ENCODE measurements at regions of chr17 and their contacts with region 1.

Region 1: GRCh38 chr17:3575511-3575910 is 17.9 kb upstream of the TRPV3 start:
- DNase-seq: peak; percentile 95
- ATAC-seq: peak; percentile 89
- H3K4me3 ChIP-seq: no peak overlapping the region
- H3K27ac ChIP-seq: peak overlapping the region; percentile 100
- H3K4me1 ChIP-seq: peaks cover 24% of the 10 kb centered on the region
- H3K27me3 ChIP-seq: no peaks in the 10 kb centered on the region
- CTCF ChIP-seq: no peak

Region 2: DNA sequence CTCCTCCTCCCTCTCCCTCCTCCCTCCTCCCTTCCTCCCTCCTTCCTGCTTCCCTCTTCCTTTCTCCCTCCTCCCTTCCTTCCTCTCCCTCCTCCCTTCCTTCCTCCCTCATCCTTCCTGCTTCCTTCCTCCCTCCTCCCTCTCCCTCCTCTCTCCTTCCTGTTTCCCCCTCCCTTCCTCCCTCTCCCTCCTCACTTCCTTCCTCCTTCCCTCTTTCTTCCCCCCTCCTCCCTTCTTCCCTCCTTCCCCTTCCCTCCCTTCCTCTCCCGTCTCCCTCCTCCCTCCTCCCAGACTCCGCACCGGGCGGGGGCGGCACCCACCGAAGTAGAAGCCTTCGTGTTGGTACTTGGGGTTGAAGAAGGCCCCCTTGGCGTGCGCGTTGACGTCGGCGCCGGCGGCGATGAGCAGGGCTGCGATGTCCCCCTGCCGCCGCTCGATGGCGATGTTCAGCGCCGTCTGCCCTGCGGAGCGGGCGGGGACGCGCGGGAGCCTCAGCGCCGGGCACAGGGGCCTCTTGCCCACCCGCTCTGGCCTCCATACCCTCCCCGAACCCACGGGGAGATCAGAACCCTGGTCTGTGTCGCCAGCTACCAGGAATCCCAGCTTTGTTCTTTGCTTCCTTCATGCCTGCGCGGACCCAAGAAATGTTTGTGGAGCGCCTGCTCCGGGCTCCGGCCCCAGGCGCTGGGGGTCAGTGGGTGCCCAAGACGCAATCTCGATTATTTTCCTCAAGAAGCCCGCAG is 40.1 kb before region 1 on chr17:
- CTCF ChIA-PET with region 1: no interaction called
- POLR2A ChIA-PET with region 1: interaction called, 11 read pairs
- intact Hi-C with region 1: no loop called
- DNase-seq: peak; percentile 77
- ATAC-seq: peak; percentile 74
- H3K4me3 ChIP-seq: peak overlapping the region; percentile 61
- H3K27ac ChIP-seq: peak overlapping the region; percentile 67
- H3K4me1 ChIP-seq: peaks cover 3% of the 10 kb centered on the region; the same call in 1 of the 2 replicates
- H3K27me3 ChIP-seq: no peaks in the 10 kb centered on the region
- CTCF ChIP-seq: peak; percentile 74

Region 3: DNA sequence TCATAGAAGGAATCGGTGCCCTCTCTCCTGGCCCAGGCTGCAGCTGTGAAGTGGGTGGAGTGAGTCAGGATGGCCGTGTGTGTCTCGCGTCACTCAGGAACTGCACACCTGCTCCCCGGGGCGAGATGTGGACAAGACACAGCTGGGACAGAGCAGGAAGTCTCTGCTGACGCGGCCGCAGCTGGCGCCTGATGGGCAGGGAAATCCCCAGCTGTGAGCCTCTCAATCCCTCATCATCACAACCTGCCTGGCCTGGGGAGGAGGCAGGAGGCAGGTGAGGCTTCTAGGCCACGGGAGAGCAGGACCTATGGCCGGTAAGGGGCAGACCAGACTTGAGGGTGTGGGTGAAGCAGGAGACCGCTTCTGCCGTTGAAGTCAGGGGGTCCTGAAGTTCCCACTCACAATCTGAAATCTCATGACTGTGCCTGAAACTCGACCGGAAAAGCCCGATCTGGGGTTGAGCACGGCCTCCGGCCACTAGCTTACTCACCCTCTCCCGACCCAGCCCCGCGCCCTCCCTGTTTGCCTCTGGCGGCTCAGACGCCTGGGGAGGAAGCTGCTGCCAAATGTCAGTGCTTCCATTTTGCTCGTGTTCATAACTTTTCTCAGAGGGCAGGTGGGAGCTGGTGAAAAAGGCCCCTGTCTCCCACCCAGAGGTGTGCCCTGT is 16.8 kb before region 1 on chr17:
- CTCF ChIA-PET with region 1: no interaction called
- POLR2A ChIA-PET with region 1: interaction called, 5 read pairs
- intact Hi-C with region 1: loop called (anchors 2 kb)
- DNase-seq: peak; percentile 74
- ATAC-seq: peak; percentile 80
- H3K4me3 ChIP-seq: peak overlapping the region; percentile 35; the same call in 1 of the 2 replicates
- H3K27ac ChIP-seq: peak overlapping the region; percentile 99
- H3K4me1 ChIP-seq: peaks cover 33% of the 10 kb centered on the region
- H3K27me3 ChIP-seq: no peaks in the 10 kb centered on the region
- CTCF ChIP-seq: no peak

Region 4: DNA sequence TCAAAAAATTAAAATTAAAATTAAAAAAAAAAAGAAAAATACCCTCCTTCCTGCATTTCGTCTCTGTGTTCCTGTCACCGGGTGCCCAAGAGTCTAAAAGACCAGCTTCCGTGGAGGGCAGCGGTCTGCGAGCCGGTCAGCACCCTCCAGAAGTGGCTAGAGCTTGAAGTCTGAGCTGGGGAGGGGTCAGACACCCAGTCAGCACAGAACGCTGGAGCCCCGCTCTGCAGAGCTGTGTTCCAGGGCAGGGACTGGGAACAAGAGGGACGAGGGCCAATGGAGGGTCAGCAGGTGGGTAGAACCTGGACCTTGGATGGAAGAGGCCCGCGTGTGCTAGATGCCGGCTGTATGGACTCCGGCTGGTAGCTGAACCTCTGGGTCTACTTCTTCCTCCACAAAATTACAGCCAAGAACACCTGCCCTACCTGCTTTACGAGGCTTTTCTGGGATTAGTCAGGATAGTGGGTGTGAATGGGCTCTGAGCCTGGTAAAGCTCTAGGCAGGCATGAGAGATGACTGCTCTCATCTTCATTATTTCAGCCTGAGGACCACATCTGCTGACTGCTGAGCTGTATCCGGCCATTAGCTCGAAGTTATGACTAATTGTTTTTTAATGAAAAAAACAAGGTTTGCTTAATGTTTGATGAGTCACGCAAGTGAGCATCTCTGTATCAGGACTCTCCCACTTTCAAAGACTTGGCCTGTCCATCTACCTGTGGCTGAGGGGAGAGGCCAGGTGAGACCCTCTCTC is 27.8 kb after region 1 on chr17:
- CTCF ChIA-PET with region 1: no interaction called
- POLR2A ChIA-PET with region 1: no interaction called
- intact Hi-C with region 1: loop called (anchors 1 kb)
- DNase-seq: peak; percentile 91
- ATAC-seq: peak; percentile 98
- H3K4me3 ChIP-seq: no peak overlapping the region
- H3K27ac ChIP-seq: peak overlapping the region; percentile 89
- H3K4me1 ChIP-seq: peaks cover 12% of the 10 kb centered on the region
- H3K27me3 ChIP-seq: no peaks in the 10 kb centered on the region
- CTCF ChIP-seq: no peak

Region 5: GRCh38 chr17:3710951-3711383 is 135.5 kb after region 1 on chr17:
- CTCF ChIA-PET with region 1: no interaction called
- POLR2A ChIA-PET with region 1: no interaction called
- intact Hi-C with region 1: no loop called
- DNase-seq: peak; percentile 55
- ATAC-seq: peak; percentile 66
- H3K4me3 ChIP-seq: no peak overlapping the region
- H3K27ac ChIP-seq: no peak overlapping the region
- H3K4me1 ChIP-seq: peaks cover 5% of the 10 kb centered on the region; the same call in 1 of the 2 replicates
- H3K27me3 ChIP-seq: no peaks in the 10 kb centered on the region
- CTCF ChIP-seq: no peak

Measured in PC-3 (cell line).